ENCODE measurements at regions of chr18 and their contacts with region 1.

Region 1: GRCh38 chr18:79380816-79381806 is 14.6 kb upstream of the NFATC1 start:
- DNase-seq: peak in 24 of 35 experiments; percentile 45 to 78 (median 60)
- ATAC-seq: peak; percentile 35 to 50 (median 44)
- H3K4me3 ChIP-seq: no peak overlapping the region
- H3K4me3 Mint-ChIP-seq: no peak overlapping the region
- H3K27ac ChIP-seq: no peak overlapping the region
- H3K27ac Mint-ChIP-seq: no peak overlapping the region
- H3K4me1 ChIP-seq: peaks cover 0 to 15% of the 10 kb centered on the region in 2 experiments
- H3K4me1 Mint-ChIP-seq: peaks cover 6 to 9% (median 7%) of the 10 kb centered on the region in 3 donors
- H3K27me3 ChIP-seq: peaks cover 0 to 2% of the 10 kb centered on the region in 2 experiments
- H3K27me3 Mint-ChIP-seq: no peaks in the 10 kb centered on the region

Region 2: GRCh38 chr18:79294235-79294634 is 86.9 kb before region 1 on chr18:
- CTCF ChIA-PET with region 1: no interaction called
- POLR2A ChIA-PET with region 1: no interaction called
- DNase-seq: no peak
- ATAC-seq: no peak
- H3K4me3 ChIP-seq: no peak overlapping the region
- H3K4me3 Mint-ChIP-seq: no peak overlapping the region
- H3K27ac ChIP-seq: no peak overlapping the region
- H3K27ac Mint-ChIP-seq: no peak overlapping the region
- H3K4me1 ChIP-seq: no peaks in the 10 kb centered on the region
- H3K4me1 Mint-ChIP-seq: peaks cover 9 to 17% (median 15%) of the 10 kb centered on the region in 3 donors
- H3K27me3 ChIP-seq: no peaks in the 10 kb centered on the region
- H3K27me3 Mint-ChIP-seq: no peaks in the 10 kb centered on the region

Region 3: GRCh38 chr18:79528846-79529245 is 147.7 kb after region 1 on chr18:
- CTCF ChIA-PET with region 1: interaction called, 3 to 10 read pairs
- POLR2A ChIA-PET with region 1: interaction called, 3 to 5 read pairs
- DNase-seq: peak in 34 of 35 experiments; percentile 44 to 84 (median 68)
- ATAC-seq: peak in 3 of 4 experiments; percentile 23 to 32 (median 29)
- H3K4me3 ChIP-seq: no peak overlapping the region
- H3K4me3 Mint-ChIP-seq: no peak overlapping the region
- H3K27ac ChIP-seq: no peak overlapping the region
- H3K27ac Mint-ChIP-seq: no peak overlapping the region
- H3K4me1 ChIP-seq: peaks cover 9 to 35% of the 10 kb centered on the region in 2 experiments
- H3K4me1 Mint-ChIP-seq: peaks cover 24 to 47% (median 24%) of the 10 kb centered on the region in 3 donors
- H3K27me3 ChIP-seq: no peaks in the 10 kb centered on the region
- H3K27me3 Mint-ChIP-seq: no peaks in the 10 kb centered on the region

Region 4: GRCh38 chr18:79538635-79539034 is 157.5 kb after region 1 on chr18:
- CTCF ChIA-PET with region 1: no interaction called
- POLR2A ChIA-PET with region 1: interaction called in 1 of 2 experiments, 12 read pairs
- DNase-seq: no peak
- ATAC-seq: no peak
- H3K4me3 ChIP-seq: no peak overlapping the region
- H3K4me3 Mint-ChIP-seq: no peak overlapping the region
- H3K27ac ChIP-seq: no peak overlapping the region
- H3K27ac Mint-ChIP-seq: no peak overlapping the region
- H3K4me1 ChIP-seq: no peaks in the 10 kb centered on the region
- H3K4me1 Mint-ChIP-seq: no peaks in the 10 kb centered on the region
- H3K27me3 ChIP-seq: peaks cover 0 to under 1% of the 10 kb centered on the region in 2 experiments
- H3K27me3 Mint-ChIP-seq: no peaks in the 10 kb centered on the region

Measured in T-cell (primary cell).